Activated B cell treated with CpG ODN at 0.5 μM for 24 hours (primary cell): ENCODE measurements at regions of chr12 and their contacts with region 1.

Region 1: GRCh38 chr12:11798856-11799501 is 149.5 kb downstream of the ETV6 start:
- DNase-seq: no peak
- ATAC-seq: no peak
- H3K4me3 Mint-ChIP-seq: no peak overlapping the region
- H3K27ac Mint-ChIP-seq: peak overlapping the region; percentile 57
- H3K4me1 Mint-ChIP-seq: peaks cover 51% of the 10 kb centered on the region
- H3K27me3 Mint-ChIP-seq: no peaks in the 10 kb centered on the region
- CTCF ChIP-seq: no peak

Region 2: DNA sequence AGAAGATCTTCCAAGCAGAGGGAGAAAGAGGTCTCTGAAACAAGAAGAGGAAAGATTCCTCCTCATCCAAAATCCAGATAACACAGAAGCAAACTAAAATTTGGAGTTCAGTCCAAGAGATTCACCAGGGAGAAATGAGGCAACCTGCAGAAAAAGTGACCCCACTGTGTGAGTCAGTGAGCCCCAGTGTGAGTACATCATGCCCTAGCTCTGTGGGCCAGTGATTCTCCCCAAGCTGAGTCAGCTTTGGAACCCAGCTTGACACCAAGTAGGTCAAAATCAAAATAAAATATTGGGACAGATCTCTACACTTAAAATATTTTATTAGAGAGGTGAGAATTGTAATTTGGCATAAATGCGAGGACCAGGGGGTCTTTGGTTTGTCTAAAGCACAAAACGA is 1947.1 kb before region 1 on chr12:
- CTCF ChIA-PET with region 1: no interaction called
- POLR2A ChIA-PET with region 1: no interaction called
- intact Hi-C with region 1: no loop called
- DNase-seq: no peak
- ATAC-seq: no peak
- H3K4me3 Mint-ChIP-seq: no peak overlapping the region
- H3K27ac Mint-ChIP-seq: no peak overlapping the region
- H3K4me1 Mint-ChIP-seq: peaks cover 2% of the 10 kb centered on the region
- H3K27me3 Mint-ChIP-seq: no peaks in the 10 kb centered on the region
- CTCF ChIP-seq: no peak

Region 3: GRCh38 chr12:11545484-11546330 is 253.3 kb before region 1 on chr12:
- CTCF ChIA-PET with region 1: no interaction called
- POLR2A ChIA-PET with region 1: no interaction called
- intact Hi-C with region 1: no loop called
- DNase-seq: no peak
- ATAC-seq: peak; percentile 78
- H3K4me3 Mint-ChIP-seq: peak overlapping the region; percentile 53
- H3K27ac Mint-ChIP-seq: peak overlapping the region; percentile 67
- H3K4me1 Mint-ChIP-seq: peaks cover 16% of the 10 kb centered on the region
- H3K27me3 Mint-ChIP-seq: no peaks in the 10 kb centered on the region
- CTCF ChIP-seq: no peak

Region 4: GRCh38 chr12:11785712-11786111 is 13.3 kb before region 1 on chr12:
- CTCF ChIA-PET with region 1: interaction called, 3 read pairs
- POLR2A ChIA-PET with region 1: interaction called, 3 read pairs
- intact Hi-C with region 1: loop called (anchors 1 kb)
- DNase-seq: no peak
- ATAC-seq: no peak
- H3K4me3 Mint-ChIP-seq: no peak overlapping the region
- H3K27ac Mint-ChIP-seq: no peak overlapping the region
- H3K4me1 Mint-ChIP-seq: peaks cover 47% of the 10 kb centered on the region
- H3K27me3 Mint-ChIP-seq: no peaks in the 10 kb centered on the region
- CTCF ChIP-seq: no peak

Region 5: DNA sequence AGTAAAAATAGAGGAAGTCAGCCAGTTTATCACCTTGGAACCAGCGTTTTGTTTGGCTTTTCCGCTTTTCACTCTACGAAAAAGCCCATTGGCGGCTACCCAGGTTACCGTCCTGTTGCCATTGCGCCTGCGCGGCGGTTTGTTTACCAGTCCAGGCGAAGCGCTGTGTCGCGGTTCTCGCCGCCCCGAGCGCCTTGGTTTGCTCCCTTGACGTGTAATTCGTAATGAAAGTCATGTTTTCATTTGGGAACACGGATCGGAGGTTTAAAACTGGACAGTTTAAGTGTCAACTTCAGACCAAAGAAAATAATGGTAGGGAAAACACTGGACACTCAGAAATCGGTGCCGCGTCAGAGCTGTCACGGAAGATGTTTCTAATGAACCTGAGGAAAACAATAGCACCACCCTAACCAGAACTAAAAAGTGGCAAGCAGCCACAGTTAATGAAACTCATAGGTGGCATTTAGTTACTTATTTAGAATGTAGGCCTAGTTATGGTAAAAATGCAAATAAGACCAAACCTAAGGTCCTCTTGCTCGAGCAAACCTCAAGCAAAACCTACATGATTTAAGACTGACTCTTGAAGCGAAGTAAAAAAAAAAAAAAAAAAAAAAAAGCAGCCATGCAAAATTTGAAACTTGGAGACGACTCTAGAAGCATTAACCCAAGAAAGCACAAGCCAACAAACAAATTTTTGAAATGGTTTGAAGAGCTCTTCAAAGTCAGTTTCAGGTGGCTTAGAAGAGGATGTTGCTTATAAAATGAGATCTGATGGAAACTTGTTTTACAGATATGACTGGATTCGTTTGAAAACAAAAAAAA is 897.8 kb after region 1 on chr12:
- CTCF ChIA-PET with region 1: no interaction called
- POLR2A ChIA-PET with region 1: no interaction called
- intact Hi-C with region 1: no loop called
- DNase-seq: peak; percentile 78
- ATAC-seq: peak; percentile 80
- H3K4me3 Mint-ChIP-seq: peak overlapping the region; percentile 96
- H3K27ac Mint-ChIP-seq: peak overlapping the region; percentile 99
- H3K4me1 Mint-ChIP-seq: peaks cover 33% of the 10 kb centered on the region
- H3K27me3 Mint-ChIP-seq: no peaks in the 10 kb centered on the region
- CTCF ChIP-seq: no peak